ENCODE measurements at regions of chr3 and their contacts with region 1.

Region 1: GRCh38 chr3:180912304-180913296 is at the start of gene FXR1:
- DNase-seq: peak; percentile 94
- H3K4me3 Mint-ChIP-seq: peak within 1 kb of the TSS; percentile 98
- H3K27ac Mint-ChIP-seq: peak within 1 kb of the TSS; percentile 97
- H3K4me1 Mint-ChIP-seq: peaks cover 29% of the 10 kb centered on the region
- H3K27me3 Mint-ChIP-seq: no peaks in the 10 kb centered on the region
- total RNA-seq, gene FXR1: 149 and 161 TPM in 2 replicates

Region 2: GRCh38 chr3:180633722-180634121 is 278.9 kb before region 1 on chr3:
- intact Hi-C with region 1: loop called (anchors 10 kb)
- DNase-seq: no peak
- H3K4me3 Mint-ChIP-seq: no peak overlapping the region
- H3K27ac Mint-ChIP-seq: no peak overlapping the region
- H3K4me1 Mint-ChIP-seq: peaks cover 2% of the 10 kb centered on the region
- H3K27me3 Mint-ChIP-seq: peaks cover 10% of the 10 kb centered on the region

Region 3: GRCh38 chr3:180781124-180781523 is 131.5 kb before region 1 on chr3:
- intact Hi-C with region 1: no loop called
- DNase-seq: no peak
- H3K4me3 Mint-ChIP-seq: no peak overlapping the region
- H3K27ac Mint-ChIP-seq: no peak overlapping the region
- H3K4me1 Mint-ChIP-seq: no peaks in the 10 kb centered on the region
- H3K27me3 Mint-ChIP-seq: no peaks in the 10 kb centered on the region

Region 4: GRCh38 chr3:180881065-180881801 is 31.4 kb before region 1 on chr3:
- intact Hi-C with region 1: no loop called
- DNase-seq: no peak
- H3K4me3 Mint-ChIP-seq: no peak overlapping the region
- H3K27ac Mint-ChIP-seq: no peak overlapping the region
- H3K4me1 Mint-ChIP-seq: no peaks in the 10 kb centered on the region
- H3K27me3 Mint-ChIP-seq: no peaks in the 10 kb centered on the region

Region 5: DNA sequence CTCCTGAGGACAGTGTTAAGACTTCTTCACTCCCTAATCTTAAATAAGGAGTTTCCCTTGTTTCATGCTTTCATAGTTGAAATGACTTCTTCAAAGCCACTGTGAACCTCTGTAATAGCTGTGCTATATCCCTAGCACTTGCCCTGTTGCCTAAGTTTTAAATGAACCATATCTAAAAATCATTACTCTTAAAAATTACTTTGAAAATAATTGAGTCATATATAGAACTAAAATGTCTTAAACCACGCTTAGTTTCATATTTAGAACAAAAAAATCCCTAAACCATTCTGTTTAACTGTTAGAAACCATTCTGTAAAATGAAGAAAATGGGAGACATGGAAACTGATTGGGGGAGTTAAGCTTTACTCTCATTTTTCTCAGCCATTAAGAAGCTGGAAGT is 47.1 kb after region 1 on chr3:
- intact Hi-C with region 1: loop called (anchors 2 kb)
- DNase-seq: no peak
- H3K4me3 Mint-ChIP-seq: no peak overlapping the region
- H3K27ac Mint-ChIP-seq: peak overlapping the region; percentile 66
- H3K4me1 Mint-ChIP-seq: peaks cover 13% of the 10 kb centered on the region
- H3K27me3 Mint-ChIP-seq: no peaks in the 10 kb centered on the region

Region 6: GRCh38 chr3:180989291-180990163 is 76.9 kb after region 1 on chr3 and contains the start of gene DNAJC19:
- intact Hi-C with region 1: loop called (anchors 1 kb)
- DNase-seq: peak; percentile 97
- H3K4me3 Mint-ChIP-seq: peak within 1 kb of the TSS; percentile 97
- H3K27ac Mint-ChIP-seq: peak within 1 kb of the TSS; percentile 96
- H3K4me1 Mint-ChIP-seq: peaks cover 20% of the 10 kb centered on the region
- H3K27me3 Mint-ChIP-seq: peaks cover 10% of the 10 kb centered on the region
- total RNA-seq, gene DNAJC19: 53.7 and 62.6 TPM in 2 replicates

Region 7: DNA sequence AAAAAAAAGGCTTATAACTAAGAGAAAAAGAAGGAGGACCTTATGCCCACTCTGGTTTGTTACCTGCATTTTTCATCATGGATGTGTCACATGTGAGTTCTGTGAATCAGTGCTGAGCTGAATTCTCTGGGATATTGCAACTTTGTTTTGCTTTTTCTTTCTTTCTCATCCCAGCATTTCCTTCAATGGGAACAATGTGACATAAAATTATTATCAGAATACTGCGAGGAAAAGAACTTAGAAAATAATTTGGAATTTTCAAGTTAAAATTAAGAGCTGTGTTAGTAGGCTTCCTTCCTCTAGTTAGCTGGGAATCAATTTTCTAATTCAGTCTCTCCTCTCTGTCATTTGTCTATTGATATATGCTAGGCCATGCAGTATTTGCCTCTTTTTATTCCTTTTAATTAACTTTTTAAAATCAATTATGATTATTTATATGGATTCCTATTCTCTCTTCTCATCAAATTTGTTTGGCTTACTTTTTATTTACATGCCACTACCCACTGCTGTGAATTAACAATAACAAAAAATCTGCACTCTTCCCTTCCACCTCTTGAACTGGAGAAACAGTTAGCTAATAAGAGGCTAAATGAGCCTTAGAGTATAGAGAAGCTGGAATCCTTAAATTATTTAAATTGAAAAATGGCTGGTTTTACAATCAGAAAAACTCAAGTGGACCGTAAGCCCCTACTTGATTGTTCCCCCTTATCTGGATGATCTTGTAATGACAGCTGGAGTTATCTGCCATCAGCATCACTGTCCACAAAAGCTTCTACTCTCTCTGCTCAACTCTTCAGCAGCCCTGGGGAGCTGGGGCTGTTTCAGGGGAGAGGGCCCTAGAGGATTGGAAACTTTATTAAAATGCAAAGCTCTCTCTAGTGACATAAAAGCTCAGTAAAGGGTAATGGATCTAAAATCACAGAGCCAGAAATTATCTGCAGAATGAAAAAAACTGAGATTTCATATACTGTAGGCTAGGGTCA is 703.8 kb after region 1 on chr3:
- intact Hi-C with region 1: no loop called
- DNase-seq: no peak
- H3K4me3 Mint-ChIP-seq: no peak overlapping the region
- H3K27ac Mint-ChIP-seq: no peak overlapping the region
- H3K4me1 Mint-ChIP-seq: no peaks in the 10 kb centered on the region
- H3K27me3 Mint-ChIP-seq: no peaks in the 10 kb centered on the region